A673 (cell line): ENCODE measurements at regions of chr12 and their contacts with region 1.

Region 1: GRCh38 chr12:123278101-123278627 is 6.5 kb upstream of the CDK2AP1 start:
- DNase-seq: peak; percentile 20
- H3K4me3 ChIP-seq: no peak overlapping the region
- H3K27ac ChIP-seq: no peak overlapping the region
- H3K4me1 ChIP-seq: no peaks in the 10 kb centered on the region
- H3K27me3 ChIP-seq: no peaks in the 10 kb centered on the region
- CTCF ChIP-seq: no peak

Region 2: GRCh38 chr12:123050331-123050831 is 227.8 kb before region 1 on chr12:
- CTCF ChIA-PET with region 1: no interaction called
- POLR2A ChIA-PET with region 1: no interaction called
- intact Hi-C with region 1: no loop called
- DNase-seq: no peak
- H3K4me3 ChIP-seq: no peak overlapping the region
- H3K27ac ChIP-seq: no peak overlapping the region
- H3K4me1 ChIP-seq: peaks cover 15% of the 10 kb centered on the region
- H3K27me3 ChIP-seq: no peaks in the 10 kb centered on the region
- CTCF ChIP-seq: no peak

Region 3: GRCh38 chr12:123163227-123163626 is 114.9 kb before region 1 on chr12:
- CTCF ChIA-PET with region 1: no interaction called
- POLR2A ChIA-PET with region 1: no interaction called
- intact Hi-C with region 1: no loop called
- DNase-seq: no peak
- H3K4me3 ChIP-seq: no peak overlapping the region
- H3K27ac ChIP-seq: no peak overlapping the region
- H3K4me1 ChIP-seq: no peaks in the 10 kb centered on the region
- H3K27me3 ChIP-seq: no peaks in the 10 kb centered on the region
- CTCF ChIP-seq: no peak

Region 4: DNA sequence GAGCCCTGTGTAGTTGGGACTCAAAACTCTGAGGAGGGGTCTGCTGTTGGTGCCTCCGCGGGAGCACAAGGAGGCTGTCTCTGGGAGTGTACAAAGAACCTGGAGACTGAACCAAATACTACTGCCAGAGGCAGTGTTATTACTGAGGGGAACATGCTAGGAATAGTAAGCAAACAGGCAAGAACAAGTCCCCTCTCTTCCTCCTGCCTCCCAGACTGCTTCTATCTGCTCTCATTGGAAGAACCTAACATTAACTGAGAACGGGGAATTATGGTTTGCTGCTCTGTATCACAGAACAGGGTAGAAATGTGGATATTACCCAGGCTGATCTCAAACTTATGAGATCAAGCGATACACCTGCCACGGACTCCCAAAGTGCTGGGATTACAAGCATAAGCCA is 101.2 kb after region 1 on chr12:
- CTCF ChIA-PET with region 1: no interaction called
- POLR2A ChIA-PET with region 1: interaction called, 10 read pairs
- intact Hi-C with region 1: no loop called
- DNase-seq: no peak
- H3K4me3 ChIP-seq: no peak overlapping the region
- H3K27ac ChIP-seq: no peak overlapping the region
- H3K4me1 ChIP-seq: no peaks in the 10 kb centered on the region
- H3K27me3 ChIP-seq: no peaks in the 10 kb centered on the region
- CTCF ChIP-seq: no peak